ENCODE measurements at regions of chr11 and their contacts with region 1.

Region 1: GRCh38 chr11:125592305-125593112 is at the start of gene STT3A:
- DNase-seq: peak; percentile 98 to 99 (median 99)
- H3K4me3 ChIP-seq: peak within 1 kb of the TSS; percentile 97 to 98
- H3K4me3 Mint-ChIP-seq: peak within 1 kb of the TSS; percentile 92 to 98 (median 94)
- H3K27ac ChIP-seq: peak within 1 kb of the TSS; percentile 96
- H3K27ac Mint-ChIP-seq: peak within 1 kb of the TSS; percentile 94 to 100 (median 98)
- H3K4me1 ChIP-seq: peaks cover 38% of the 10 kb centered on the region
- H3K4me1 Mint-ChIP-seq: peaks cover 32 to 59% (median 45%) of the 10 kb centered on the region in 4 donors
- H3K27me3 ChIP-seq: no peaks in the 10 kb centered on the region
- H3K27me3 Mint-ChIP-seq: no peaks in the 10 kb centered on the region
- total RNA-seq, gene STT3A: 133 to 138 TPM

Region 2: DNA sequence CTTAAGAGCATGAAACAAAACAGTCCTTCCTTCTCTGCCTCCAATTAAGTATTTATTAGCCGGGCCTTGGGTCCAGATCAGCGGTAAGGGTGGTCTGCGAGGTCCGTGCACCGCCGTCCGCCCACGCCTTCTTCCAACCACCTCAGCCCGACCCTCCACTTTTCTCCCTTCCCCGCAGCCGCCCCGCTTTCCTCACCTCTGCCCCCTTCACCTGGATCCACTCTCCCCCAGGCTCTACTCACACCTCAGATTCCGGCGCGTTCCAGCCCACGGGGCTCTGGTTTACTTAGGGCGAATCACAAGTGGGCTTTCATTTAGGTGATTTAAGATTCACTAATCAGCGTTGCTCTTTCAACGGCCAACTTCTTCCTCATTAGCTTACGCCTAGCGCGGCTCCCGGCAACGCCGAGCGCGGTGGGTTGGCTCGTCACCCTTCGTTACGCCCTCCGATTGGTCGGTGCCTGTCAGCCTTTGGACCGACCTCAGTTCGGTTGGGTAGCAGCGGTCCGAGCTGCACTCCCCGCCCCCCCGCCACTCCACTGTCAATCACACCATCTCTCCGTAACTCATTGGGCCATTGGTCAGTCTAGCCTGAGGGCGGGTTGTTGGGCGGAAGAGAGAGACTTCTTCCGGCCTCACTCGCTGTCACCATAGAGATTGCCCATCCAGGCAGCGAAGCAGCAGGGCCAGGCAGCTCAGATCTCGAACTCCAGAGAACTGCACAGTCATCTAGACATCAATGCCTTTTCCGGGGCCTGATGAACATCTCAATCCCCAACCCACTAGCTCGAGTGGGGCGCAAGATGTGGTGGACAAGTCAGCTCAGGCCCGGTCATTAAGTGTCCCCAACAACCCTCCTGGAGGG is 480.9 kb before region 1 on chr11 and contains the start of gene TMEM218:
- CTCF ChIA-PET with region 1: no interaction called
- POLR2A ChIA-PET with region 1: interaction called, 3 read pairs
- intact Hi-C with region 1: loop called (anchors 10 kb)
- DNase-seq: peak; percentile 94 to 97 (median 96)
- H3K4me3 ChIP-seq: peak within 1 kb of the TSS; percentile 72 to 89
- H3K4me3 Mint-ChIP-seq: peak within 1 kb of the TSS; percentile 92 to 100 (median 98)
- H3K27ac ChIP-seq: peak within 1 kb of the TSS; percentile 68
- H3K27ac Mint-ChIP-seq: peak within 1 kb of the TSS; percentile 74 to 99 (median 97)
- H3K4me1 ChIP-seq: peaks cover 18% of the 10 kb centered on the region
- H3K4me1 Mint-ChIP-seq: peaks cover 4 to 25% (median 18%) of the 10 kb centered on the region in 4 donors
- H3K27me3 ChIP-seq: no peaks in the 10 kb centered on the region
- H3K27me3 Mint-ChIP-seq: no peaks in the 10 kb centered on the region
- total RNA-seq, gene TMEM218: 15.1 to 16.6 TPM

Region 3: DNA sequence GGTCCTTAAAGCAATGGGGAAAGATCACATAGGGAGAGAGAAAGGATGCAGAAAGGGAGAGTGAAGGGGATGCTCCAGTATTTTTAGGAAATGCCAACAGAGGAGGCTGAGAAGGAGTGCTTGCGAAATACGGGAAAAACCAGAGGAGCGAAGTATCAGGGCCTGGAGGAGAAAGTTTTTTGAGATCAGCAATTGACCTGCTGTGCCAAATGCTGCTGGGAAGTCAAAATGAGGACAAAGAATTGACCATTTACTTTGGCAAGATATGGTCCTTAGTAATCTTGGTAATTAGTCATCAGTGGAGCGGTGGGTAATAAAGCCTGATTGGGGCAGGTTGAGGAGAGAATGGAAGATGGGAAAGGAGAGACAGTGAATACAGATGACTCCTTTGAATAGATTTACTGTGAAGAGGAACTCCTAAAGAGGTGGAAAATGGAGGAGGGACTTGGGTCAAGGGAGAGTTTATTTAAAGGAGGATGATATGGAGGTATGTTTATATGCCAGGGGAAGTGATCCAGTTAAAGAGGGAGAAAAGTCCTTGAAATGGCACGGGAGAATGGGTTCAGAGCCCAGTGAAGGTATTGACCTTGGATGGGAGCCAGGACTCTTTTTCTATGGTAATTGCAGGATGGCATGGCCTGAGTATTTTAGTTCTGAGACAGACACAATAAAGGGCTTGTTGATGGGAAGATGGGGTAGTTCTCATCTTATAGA is 316.4 kb before region 1 on chr11:
- CTCF ChIA-PET with region 1: no interaction called
- POLR2A ChIA-PET with region 1: no interaction called
- intact Hi-C with region 1: no loop called
- DNase-seq: no peak
- H3K4me3 ChIP-seq: no peak overlapping the region
- H3K4me3 Mint-ChIP-seq: no peak overlapping the region
- H3K27ac ChIP-seq: no peak overlapping the region
- H3K27ac Mint-ChIP-seq: no peak overlapping the region
- H3K4me1 ChIP-seq: no peaks in the 10 kb centered on the region
- H3K4me1 Mint-ChIP-seq: no peaks in the 10 kb centered on the region
- H3K27me3 ChIP-seq: no peaks in the 10 kb centered on the region
- H3K27me3 Mint-ChIP-seq: peaks cover 6 to 7% of the 10 kb centered on the region in 2 donors

Region 4: DNA sequence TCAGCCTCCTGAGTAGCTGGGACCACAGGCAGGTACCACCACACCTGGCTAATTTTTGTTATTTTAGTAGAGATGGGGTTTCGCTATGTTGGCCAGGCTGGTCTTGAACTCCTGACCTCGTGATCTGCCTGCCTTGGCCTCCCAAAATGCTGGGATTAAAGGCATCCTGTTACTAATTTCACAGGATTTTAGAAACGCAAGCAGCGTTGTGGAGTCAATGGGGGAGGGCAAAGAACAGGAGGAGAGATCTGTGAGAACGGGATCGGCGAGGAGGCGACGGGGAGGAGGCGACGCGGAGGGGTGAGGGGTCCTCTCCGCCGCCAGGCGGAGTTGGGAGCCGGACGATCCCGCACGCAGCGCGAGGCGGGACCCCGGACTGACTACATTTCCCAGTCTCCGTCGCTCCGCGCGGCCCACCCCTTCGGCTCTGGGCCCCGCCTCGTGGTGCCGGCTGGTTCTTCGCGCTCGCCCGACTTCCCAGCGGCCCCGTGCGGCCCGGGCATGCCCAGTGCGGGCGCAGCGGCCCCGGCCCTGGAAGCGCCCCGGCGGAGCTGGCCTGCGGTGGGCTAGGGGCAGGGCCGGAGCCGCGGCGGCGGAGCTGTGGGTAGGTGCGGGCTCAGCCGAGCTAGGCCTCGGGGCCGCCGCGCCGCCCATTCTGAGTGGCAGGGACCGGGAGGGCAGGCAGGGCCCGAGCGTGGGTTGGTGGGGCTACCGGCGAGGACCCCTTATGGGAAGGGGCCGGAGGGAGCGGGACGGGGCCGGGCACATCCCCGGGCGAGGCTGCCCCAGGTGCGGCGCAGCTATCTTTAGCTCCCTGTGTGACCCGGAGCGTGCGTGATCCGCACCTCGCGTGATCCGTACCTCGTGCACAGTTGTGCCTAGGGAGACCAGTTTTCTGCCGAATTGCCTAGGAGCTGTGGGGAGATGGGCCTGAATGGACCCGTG is 23.3 kb before region 1 on chr11 and contains the start of gene EI24:
- CTCF ChIA-PET with region 1: interaction called, 37 read pairs
- POLR2A ChIA-PET with region 1: interaction called, 107 read pairs
- intact Hi-C with region 1: loop called (anchors 1 kb)
- DNase-seq: peak; percentile 83 to 86 (median 85)
- H3K4me3 ChIP-seq: peak within 1 kb of the TSS; percentile 84 to 93
- H3K4me3 Mint-ChIP-seq: peak within 1 kb of the TSS; percentile 88 to 95 (median 93)
- H3K27ac ChIP-seq: peak within 1 kb of the TSS; percentile 81
- H3K27ac Mint-ChIP-seq: peak within 1 kb of the TSS; percentile 85 to 97 (median 94)
- H3K4me1 ChIP-seq: peaks cover 25% of the 10 kb centered on the region
- H3K4me1 Mint-ChIP-seq: peaks cover 13 to 32% (median 18%) of the 10 kb centered on the region in 4 donors
- H3K27me3 ChIP-seq: no peaks in the 10 kb centered on the region
- H3K27me3 Mint-ChIP-seq: peaks cover 0 to 1% of the 10 kb centered on the region in 2 donors
- total RNA-seq, gene EI24: 35.5 to 36.8 TPM

Region 5: DNA sequence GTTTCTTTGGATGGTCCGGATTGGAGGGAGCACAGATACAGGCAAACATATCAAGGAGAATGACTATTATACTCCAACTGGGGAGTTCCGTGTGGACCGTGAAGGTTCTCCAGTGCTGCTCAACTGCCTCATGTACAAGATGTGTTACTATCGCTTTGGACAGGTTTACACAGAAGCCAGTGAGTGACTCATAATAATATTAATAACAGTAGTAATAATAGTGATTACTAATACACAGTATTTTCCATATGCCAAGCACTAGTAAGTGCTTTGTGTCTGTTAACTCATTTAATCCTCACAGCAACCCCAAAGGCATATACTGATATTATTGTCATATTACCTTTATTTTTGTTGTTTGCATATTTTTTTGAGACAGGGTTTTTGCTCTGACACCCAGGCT is 25.9 kb after region 1 on chr11:
- CTCF ChIA-PET with region 1: interaction called, 4 read pairs
- POLR2A ChIA-PET with region 1: interaction called, 76 read pairs
- intact Hi-C with region 1: no loop called
- DNase-seq: no peak
- H3K4me3 ChIP-seq: no peak overlapping the region
- H3K4me3 Mint-ChIP-seq: no peak overlapping the region
- H3K27ac ChIP-seq: no peak overlapping the region
- H3K27ac Mint-ChIP-seq: no peak overlapping the region
- H3K4me1 ChIP-seq: no peaks in the 10 kb centered on the region
- H3K4me1 Mint-ChIP-seq: no peaks in the 10 kb centered on the region
- H3K27me3 ChIP-seq: no peaks in the 10 kb centered on the region
- H3K27me3 Mint-ChIP-seq: no peaks in the 10 kb centered on the region

Region 6: GRCh38 chr11:125887373-125888324 is 295.1 kb after region 1 on chr11 and contains the start of gene HYLS1:
- CTCF ChIA-PET with region 1: interaction called, 4 read pairs
- POLR2A ChIA-PET with region 1: interaction called, 26 read pairs
- intact Hi-C with region 1: loop called (anchors 1 kb)
- DNase-seq: peak; percentile 96 to 99 (median 96)
- H3K4me3 ChIP-seq: peak within 1 kb of the TSS; percentile 67 to 73
- H3K4me3 Mint-ChIP-seq: peak within 1 kb of the TSS; percentile 89 to 99 (median 94)
- H3K27ac ChIP-seq: peak within 1 kb of the TSS; percentile 79
- H3K27ac Mint-ChIP-seq: peak within 1 kb of the TSS; percentile 96 to 99 (median 98)
- H3K4me1 ChIP-seq: peaks cover 33% of the 10 kb centered on the region
- H3K4me1 Mint-ChIP-seq: peaks cover 20 to 45% (median 30%) of the 10 kb centered on the region in 4 donors
- H3K27me3 ChIP-seq: no peaks in the 10 kb centered on the region
- H3K27me3 Mint-ChIP-seq: peaks cover 0 to 6% of the 10 kb centered on the region in 2 donors
- total RNA-seq, gene HYLS1: 8.1 to 8.2 TPM

Region 7: DNA sequence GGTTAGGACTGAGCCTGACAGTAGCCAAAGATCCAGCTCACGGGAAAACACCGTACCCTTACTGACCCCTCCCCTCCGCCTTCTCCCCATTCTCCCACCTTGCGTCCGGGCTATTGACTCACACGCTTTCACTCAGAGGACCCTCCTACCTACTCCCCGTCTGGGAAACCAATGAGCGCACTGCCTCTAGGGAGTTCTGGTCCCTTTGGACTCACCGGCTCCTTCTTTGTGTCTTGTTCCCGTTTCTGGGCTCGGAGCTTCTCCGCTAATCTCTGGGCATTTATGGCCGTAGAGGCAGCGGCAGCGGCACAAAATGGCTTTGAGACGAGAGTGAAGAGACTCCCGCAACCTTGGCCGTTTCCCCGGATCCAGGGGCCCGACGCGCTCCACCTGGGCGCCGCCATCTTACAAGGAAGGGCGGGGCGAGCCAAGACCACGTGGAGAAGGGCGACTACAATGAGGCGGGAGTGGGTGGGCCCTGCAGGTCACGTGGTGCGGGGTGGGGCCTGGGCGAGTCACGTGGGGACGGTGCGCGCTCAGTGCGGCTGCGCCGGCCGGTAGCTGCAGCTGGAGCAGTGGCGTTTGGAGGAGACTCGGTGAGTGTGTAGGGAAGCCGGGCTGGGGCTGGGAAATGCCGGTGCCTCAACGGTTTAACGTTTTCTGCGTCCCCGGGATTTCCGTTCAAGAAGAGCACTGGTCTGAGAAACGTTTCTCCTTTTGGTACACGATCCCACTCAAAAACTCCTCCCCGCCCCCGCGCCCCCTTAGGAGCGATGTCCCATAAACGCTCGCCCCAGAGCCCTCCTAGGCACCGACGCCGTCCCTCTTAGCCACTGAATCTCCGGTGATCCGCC is 619.0 kb after region 1 on chr11 and contains the starts of genes FAM118B and RPUSD4:
- CTCF ChIA-PET with region 1: no interaction called
- POLR2A ChIA-PET with region 1: no interaction called
- intact Hi-C with region 1: loop called (anchors 1 kb)
- DNase-seq: peak; percentile 98
- H3K4me3 ChIP-seq: peak within 1 kb of the TSS; percentile 44 to 91
- H3K4me3 Mint-ChIP-seq: peak within 1 kb of the TSS; percentile 99 to 100 (median 99)
- H3K27ac ChIP-seq: peak within 1 kb of the TSS; percentile 67
- H3K27ac Mint-ChIP-seq: peak within 1 kb of the TSS; percentile 91 to 99 (median 98)
- H3K4me1 ChIP-seq: peaks cover 24% of the 10 kb centered on the region
- H3K4me1 Mint-ChIP-seq: peaks cover 27 to 43% (median 32%) of the 10 kb centered on the region in 4 donors
- H3K27me3 ChIP-seq: no peaks in the 10 kb centered on the region
- H3K27me3 Mint-ChIP-seq: no peaks in the 10 kb centered on the region
- total RNA-seq, gene FAM118B: 12.6 to 13.2 TPM
- total RNA-seq, gene RPUSD4: 39.3 to 41.2 TPM

Measured in CD4-positive, alpha-beta memory T cell (primary cell).